T-cell (primary cell): ENCODE measurements at regions of chr9 and their contacts with region 1.

Region 1: GRCh38 chr9:100222674-100223073 is 123.6 kb downstream of the INVS start:
- DNase-seq: no peak
- ATAC-seq: no peak
- H3K4me3 ChIP-seq: no peak overlapping the region
- H3K4me3 Mint-ChIP-seq: no peak overlapping the region
- H3K27ac ChIP-seq: no peak overlapping the region
- H3K27ac Mint-ChIP-seq: no peak overlapping the region
- H3K4me1 ChIP-seq: no peaks in the 10 kb centered on the region
- H3K4me1 Mint-ChIP-seq: no peaks in the 10 kb centered on the region
- H3K27me3 ChIP-seq: no peaks in the 10 kb centered on the region
- H3K27me3 Mint-ChIP-seq: no peaks in the 10 kb centered on the region

Region 2: GRCh38 chr9:98318834-98319478 is 1903.7 kb before region 1 on chr9:
- CTCF ChIA-PET with region 1: no interaction called
- POLR2A ChIA-PET with region 1: interaction called in 1 of 2 experiments, 14 read pairs
- DNase-seq: no peak
- ATAC-seq: no peak
- H3K4me3 ChIP-seq: no peak overlapping the region
- H3K4me3 Mint-ChIP-seq: no peak overlapping the region
- H3K27ac ChIP-seq: no peak overlapping the region
- H3K27ac Mint-ChIP-seq: no peak overlapping the region
- H3K4me1 ChIP-seq: peaks cover 0 to 5% of the 10 kb centered on the region in 2 experiments
- H3K4me1 Mint-ChIP-seq: peaks cover 0 to 4% (median 0%) of the 10 kb centered on the region in 3 donors
- H3K27me3 ChIP-seq: peaks cover 0 to 20% of the 10 kb centered on the region in 2 experiments
- H3K27me3 Mint-ChIP-seq: peaks cover 4 to 9% of the 10 kb centered on the region in 2 donors

Region 3: DNA sequence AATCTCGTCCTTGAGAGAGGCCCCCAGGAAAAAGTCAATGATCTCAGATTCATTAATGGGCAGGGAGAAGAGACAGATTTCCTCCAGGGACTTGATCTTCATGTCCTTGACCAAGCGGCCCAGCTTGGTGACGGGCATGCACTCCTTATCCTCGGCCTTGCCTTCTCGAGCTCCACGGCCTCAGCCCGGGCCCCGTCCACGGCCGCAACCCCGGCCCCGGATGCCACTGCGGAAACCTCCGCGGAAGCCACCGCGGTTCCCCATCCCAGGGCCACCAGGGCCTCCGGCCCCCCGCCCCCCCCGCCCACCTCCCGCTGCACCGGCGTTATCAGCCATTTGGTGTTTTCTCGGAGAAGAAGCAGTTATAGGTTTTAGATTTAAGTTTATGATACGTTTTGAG is 105.4 kb before region 1 on chr9:
- CTCF ChIA-PET with region 1: interaction called in 1 of 2 experiments, 10 read pairs
- POLR2A ChIA-PET with region 1: no interaction called
- DNase-seq: no peak
- ATAC-seq: no peak
- H3K4me3 ChIP-seq: no peak overlapping the region
- H3K4me3 Mint-ChIP-seq: no peak overlapping the region
- H3K27ac ChIP-seq: no peak overlapping the region
- H3K27ac Mint-ChIP-seq: no peak overlapping the region
- H3K4me1 ChIP-seq: no peaks in the 10 kb centered on the region
- H3K4me1 Mint-ChIP-seq: peaks cover 17 to 24% (median 18%) of the 10 kb centered on the region in 3 donors
- H3K27me3 ChIP-seq: no peaks in the 10 kb centered on the region
- H3K27me3 Mint-ChIP-seq: no peaks in the 10 kb centered on the region

Region 4: GRCh38 chr9:100281676-100282387 is 59.2 kb after region 1 on chr9:
- CTCF ChIA-PET with region 1: no interaction called
- POLR2A ChIA-PET with region 1: no interaction called
- DNase-seq: no peak
- ATAC-seq: no peak
- H3K4me3 ChIP-seq: no peak overlapping the region
- H3K4me3 Mint-ChIP-seq: no peak overlapping the region
- H3K27ac ChIP-seq: no peak overlapping the region
- H3K27ac Mint-ChIP-seq: no peak overlapping the region
- H3K4me1 ChIP-seq: no peaks in the 10 kb centered on the region
- H3K4me1 Mint-ChIP-seq: no peaks in the 10 kb centered on the region
- H3K27me3 ChIP-seq: no peaks in the 10 kb centered on the region
- H3K27me3 Mint-ChIP-seq: no peaks in the 10 kb centered on the region